Endothelial cell of umbilical vein (primary cell): ENCODE measurements at regions of chr7 and their contacts with region 1.

Region 1: DNA sequence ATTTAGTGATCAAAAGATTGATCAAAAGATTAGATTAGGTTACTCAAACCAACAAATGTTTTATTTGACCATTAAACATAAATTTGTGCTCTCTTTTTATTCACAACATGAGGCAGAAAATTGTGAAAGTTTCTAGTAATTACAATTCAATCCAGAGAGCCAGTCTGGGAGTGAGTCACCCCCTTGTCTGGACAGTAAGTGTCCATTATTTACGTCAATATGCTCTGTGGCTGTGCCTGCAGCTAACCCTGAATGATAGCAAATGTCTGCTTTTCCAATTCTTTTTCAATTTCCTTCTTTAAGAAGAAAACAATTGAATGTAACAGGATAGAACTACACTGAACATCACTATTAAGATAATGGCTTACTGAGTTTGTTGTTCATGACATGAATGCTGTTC is 27.9 kb downstream of the GNG11 start:
- DNase-seq: peak; percentile 84
- H3K4me3 ChIP-seq: no peak overlapping the region
- H3K27ac ChIP-seq: peak overlapping the region; percentile 72
- H3K4me1 ChIP-seq: peaks cover 38% of the 10 kb centered on the region
- H3K27me3 ChIP-seq: no peaks in the 10 kb centered on the region
- CTCF ChIP-seq: no peak
- POLR2A ChIP-seq: no peak

Region 2: GRCh38 chr7:93910076-93910994 is 39.1 kb before region 1 on chr7:
- CTCF ChIA-PET with region 1: no interaction called
- POLR2A ChIA-PET with region 1: no interaction called
- dilution Hi-C with region 1: no loop called
- intact Hi-C with region 1: loop called (anchors 5 kb)
- DNase-seq: peak; percentile 86
- H3K4me3 ChIP-seq: peak overlapping the region in 1 of 3 experiments; percentile 18
- H3K27ac ChIP-seq: peak overlapping the region; percentile 47
- H3K4me1 ChIP-seq: peaks cover 54% of the 10 kb centered on the region
- H3K27me3 ChIP-seq: no peaks in the 10 kb centered on the region
- CTCF ChIP-seq: no peak
- POLR2A ChIP-seq: no peak

Region 3: GRCh38 chr7:94004024-94004951 is 54.8 kb after region 1 on chr7 and contains the start of gene BET1:
- CTCF ChIA-PET with region 1: no interaction called
- POLR2A ChIA-PET with region 1: interaction called, 3 read pairs
- dilution Hi-C with region 1: no loop called
- intact Hi-C with region 1: loop called (anchors 2 kb)
- DNase-seq: peak; percentile 96
- H3K4me3 ChIP-seq: peak within 1 kb of the TSS; percentile 85 to 95 (median 87)
- H3K27ac ChIP-seq: peak within 1 kb of the TSS; percentile 76
- H3K4me1 ChIP-seq: peaks cover 16% of the 10 kb centered on the region
- H3K27me3 ChIP-seq: peaks cover 10 to 23% of the 10 kb centered on the region in 2 experiments
- CTCF ChIP-seq: no peak
- POLR2A ChIP-seq: peak; percentile 66
- total RNA-seq, gene BET1: 23.9 and 28.4 TPM in 2 replicates

Region 4: GRCh38 chr7:94069162-94069739 is 119.8 kb after region 1 on chr7:
- CTCF ChIA-PET with region 1: no interaction called
- POLR2A ChIA-PET with region 1: no interaction called
- dilution Hi-C with region 1: no loop called
- intact Hi-C with region 1: loop called (anchors 1 kb)
- DNase-seq: no peak
- H3K4me3 ChIP-seq: no peak overlapping the region
- H3K27ac ChIP-seq: no peak overlapping the region
- H3K4me1 ChIP-seq: peaks cover 20% of the 10 kb centered on the region
- H3K27me3 ChIP-seq: peaks cover 50 to 74% of the 10 kb centered on the region in 2 experiments
- CTCF ChIP-seq: no peak
- POLR2A ChIP-seq: no peak

Region 5: DNA sequence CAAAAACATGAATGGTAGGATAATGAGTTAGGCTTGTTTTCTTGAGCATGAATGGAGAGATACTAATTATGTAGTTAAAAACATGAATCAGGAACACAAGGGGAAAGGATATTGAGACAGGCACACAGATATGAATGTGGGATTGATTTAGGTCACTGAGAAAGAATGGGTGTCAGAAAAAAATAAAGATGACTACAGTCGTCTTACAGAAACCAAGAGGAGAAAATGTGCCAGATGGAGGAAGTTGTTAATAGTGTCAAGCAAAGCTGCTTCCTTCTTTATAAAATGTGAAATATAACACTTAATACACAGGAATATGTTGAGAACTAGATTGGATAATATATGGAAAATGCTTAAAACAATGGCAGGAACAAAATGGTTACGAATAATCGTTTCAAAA is 228.0 kb after region 1 on chr7:
- CTCF ChIA-PET with region 1: interaction called, 5 read pairs
- POLR2A ChIA-PET with region 1: no interaction called
- dilution Hi-C with region 1: no loop called
- intact Hi-C with region 1: loop called (anchors 1 kb)
- DNase-seq: peak; percentile 96
- H3K4me3 ChIP-seq: no peak overlapping the region
- H3K27ac ChIP-seq: peak overlapping the region; percentile 89
- H3K4me1 ChIP-seq: peaks cover 67% of the 10 kb centered on the region
- H3K27me3 ChIP-seq: no peaks in the 10 kb centered on the region
- CTCF ChIP-seq: no peak
- POLR2A ChIP-seq: no peak